ENCODE measurements at regions of chr4 and their contacts with region 1.

Region 1: GRCh38 chr4:8403173-8403753 is 37.3 kb downstream of the ACOX3 start:
- DNase-seq: peak; percentile 63
- ATAC-seq: peak; percentile 67
- H3K4me3 Mint-ChIP-seq: no peak overlapping the region
- H3K27ac Mint-ChIP-seq: no peak overlapping the region
- H3K4me1 Mint-ChIP-seq: no peaks in the 10 kb centered on the region
- H3K27me3 Mint-ChIP-seq: no peaks in the 10 kb centered on the region
- CTCF ChIP-seq: peak; percentile 79

Region 2: DNA sequence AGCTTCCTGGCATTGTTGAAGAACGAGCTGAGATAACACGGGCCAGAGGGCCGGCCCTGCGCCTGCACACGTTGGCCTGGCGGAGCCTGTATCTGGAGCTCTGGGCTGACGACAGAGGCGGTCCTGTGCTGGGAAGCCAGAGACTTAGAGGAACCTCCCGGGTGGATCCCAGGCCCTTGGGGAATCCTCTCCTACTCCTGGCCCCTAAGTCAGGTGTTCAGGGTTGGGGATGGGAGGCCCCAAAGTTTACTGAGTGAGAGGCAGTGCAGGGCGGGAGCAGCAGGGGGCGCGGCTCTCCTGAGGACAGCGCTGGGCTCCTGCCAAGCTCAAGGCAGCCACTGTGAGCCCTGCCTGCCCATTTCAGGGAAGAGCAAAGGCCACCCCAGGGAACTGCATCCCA is 136.2 kb before region 1 on chr4:
- CTCF ChIA-PET with region 1: interaction called, 15 read pairs
- POLR2A ChIA-PET with region 1: no interaction called
- intact Hi-C with region 1: no loop called
- DNase-seq: peak; percentile 69
- ATAC-seq: peak; percentile 88
- H3K4me3 Mint-ChIP-seq: no peak overlapping the region
- H3K27ac Mint-ChIP-seq: no peak overlapping the region
- H3K4me1 Mint-ChIP-seq: no peaks in the 10 kb centered on the region
- H3K27me3 Mint-ChIP-seq: peaks cover 22% of the 10 kb centered on the region
- CTCF ChIP-seq: peak; percentile 51

Region 3: DNA sequence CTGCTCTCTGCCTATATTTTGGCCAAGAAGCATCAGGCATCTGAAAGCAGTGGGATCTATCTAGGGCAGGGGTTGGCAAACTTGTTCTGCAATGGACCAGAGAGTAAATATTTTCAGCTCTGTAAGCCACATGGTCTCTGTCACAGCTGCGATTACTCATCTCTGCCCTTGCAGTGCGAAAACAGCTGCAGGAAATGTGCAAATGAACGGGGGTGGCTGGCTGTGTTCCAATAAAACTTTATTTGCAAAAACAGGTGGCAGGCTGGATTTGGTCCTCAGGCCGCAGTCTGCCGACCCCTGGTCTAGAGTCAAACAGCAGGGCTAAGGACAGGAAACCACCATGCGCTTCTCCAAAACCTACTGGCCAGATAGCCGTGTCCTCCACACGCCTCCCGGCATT is 11.3 kb before region 1 on chr4:
- CTCF ChIA-PET with region 1: interaction called, 12 read pairs
- POLR2A ChIA-PET with region 1: no interaction called
- intact Hi-C with region 1: no loop called
- DNase-seq: peak; percentile 29
- ATAC-seq: no peak
- H3K4me3 Mint-ChIP-seq: no peak overlapping the region
- H3K27ac Mint-ChIP-seq: no peak overlapping the region
- H3K4me1 Mint-ChIP-seq: peaks cover 6% of the 10 kb centered on the region
- H3K27me3 Mint-ChIP-seq: no peaks in the 10 kb centered on the region
- CTCF ChIP-seq: no peak

Region 4: DNA sequence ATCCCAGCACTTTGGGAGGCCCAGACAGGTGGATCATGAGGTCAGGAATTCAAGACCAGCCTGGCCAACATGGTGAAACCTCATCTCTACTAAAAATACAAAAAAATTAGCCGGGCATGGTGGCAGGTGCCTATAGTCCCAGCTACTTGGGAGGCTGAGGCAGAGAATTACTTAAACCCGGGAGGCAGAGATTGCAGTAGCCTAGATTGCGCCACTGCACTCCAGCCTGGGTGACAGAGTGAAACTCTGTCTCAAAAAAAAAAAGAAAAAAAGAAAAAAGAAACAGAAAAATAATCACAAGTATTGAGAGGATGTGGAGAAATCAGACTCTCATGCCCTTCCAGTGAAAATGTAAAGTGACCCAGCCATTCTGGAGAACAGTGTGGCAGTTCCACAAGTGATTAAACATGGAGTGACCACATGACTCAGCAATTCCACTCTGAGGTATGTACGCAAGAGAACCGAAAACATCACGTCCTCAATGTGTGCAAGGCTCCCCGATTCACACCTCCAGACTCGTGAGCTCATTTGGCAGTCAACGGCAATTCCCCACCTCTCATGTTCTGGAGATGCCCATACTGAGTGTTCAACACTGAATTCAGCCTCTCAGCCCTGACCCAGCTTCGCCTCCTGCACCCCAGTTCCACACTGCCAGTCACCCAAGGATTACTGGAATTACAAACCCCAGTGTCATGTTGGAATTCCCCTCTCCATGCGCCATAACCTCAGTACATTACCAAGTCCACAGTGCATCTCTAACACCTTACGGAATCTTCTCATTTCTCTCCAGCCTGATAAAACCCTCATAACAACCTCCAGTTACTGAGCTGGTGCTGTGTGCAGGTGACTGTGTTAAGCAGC is 16.1 kb after region 1 on chr4:
- CTCF ChIA-PET with region 1: interaction called, 14 read pairs
- POLR2A ChIA-PET with region 1: no interaction called
- intact Hi-C with region 1: no loop called
- DNase-seq: peak; percentile 81
- ATAC-seq: peak; percentile 96
- H3K4me3 Mint-ChIP-seq: no peak overlapping the region
- H3K27ac Mint-ChIP-seq: peak overlapping the region; percentile 92
- H3K4me1 Mint-ChIP-seq: peaks cover 29% of the 10 kb centered on the region
- H3K27me3 Mint-ChIP-seq: no peaks in the 10 kb centered on the region
- CTCF ChIP-seq: no peak

Region 5: GRCh38 chr4:8440492-8441341 is 37.5 kb after region 1 on chr4 and contains the starts of genes ACOX3 and TRMT44:
- CTCF ChIA-PET with region 1: no interaction called
- POLR2A ChIA-PET with region 1: no interaction called
- intact Hi-C with region 1: no loop called
- DNase-seq: peak; percentile 92
- ATAC-seq: peak; percentile 92
- H3K4me3 Mint-ChIP-seq: peak within 1 kb of the TSS; percentile 89
- H3K27ac Mint-ChIP-seq: peak within 1 kb of the TSS; percentile 93
- H3K4me1 Mint-ChIP-seq: peaks cover 63% of the 10 kb centered on the region
- H3K27me3 Mint-ChIP-seq: no peaks in the 10 kb centered on the region
- CTCF ChIP-seq: no peak
- total RNA-seq, gene ACOX3: 24.2 to 27.8 TPM
- total RNA-seq, gene TRMT44: 25.5 to 26.3 TPM